OCI-LY7 (cell line): ENCODE measurements at regions of chr3 and their contacts with region 1.

Region 1: DNA sequence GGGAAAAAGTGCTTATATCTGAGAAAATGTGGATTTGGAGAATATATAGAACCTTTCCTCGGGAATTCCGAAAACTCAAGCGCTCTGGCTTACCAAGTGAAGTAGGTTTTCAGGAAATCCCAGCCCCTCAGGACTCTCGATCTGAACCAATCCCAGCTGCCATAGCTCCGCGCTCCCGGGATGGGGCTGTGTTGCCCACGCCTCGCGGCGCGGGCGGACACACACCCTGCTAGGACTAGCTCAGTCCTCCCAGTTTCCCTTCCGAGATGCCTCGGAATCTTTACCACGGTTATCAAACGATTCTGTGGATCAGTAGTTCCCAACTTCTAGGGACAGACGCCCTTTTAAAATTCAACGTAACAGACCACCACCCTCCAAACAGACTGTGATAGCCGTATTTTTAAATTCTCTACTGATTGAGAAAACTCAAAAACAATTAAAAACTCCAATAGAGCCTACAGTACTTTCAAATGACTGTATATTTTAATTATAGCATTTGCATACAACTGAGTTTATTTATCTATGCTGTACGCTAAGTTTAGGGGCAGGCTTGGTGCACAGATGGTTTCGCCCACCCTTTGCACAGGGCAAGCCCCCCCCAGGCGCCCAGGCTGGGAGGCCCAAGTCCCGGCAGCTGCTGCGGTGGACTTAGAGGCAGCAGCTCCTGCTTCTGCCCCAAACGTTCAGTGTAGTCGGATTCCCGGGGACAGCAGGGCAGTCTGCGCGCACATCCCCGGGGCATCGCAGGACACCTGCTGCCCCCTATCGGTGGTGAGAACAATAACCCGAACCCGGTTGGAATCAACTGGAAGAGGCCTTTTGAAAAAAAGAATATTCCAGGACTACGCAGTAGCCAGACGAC is 52.3 kb downstream of the CCDC54 start:
- DNase-seq: peak; percentile 74
- H3K4me3 ChIP-seq: peak overlapping the region; percentile 19
- H3K27ac ChIP-seq: no peak overlapping the region
- H3K4me1 ChIP-seq: peaks cover 71% of the 10 kb centered on the region
- CTCF ChIP-seq: peak; percentile 88

Region 2: GRCh38 chr3:107142786-107143575 is 286.6 kb before region 1 on chr3:
- CTCF ChIA-PET with region 1: no interaction called
- POLR2A ChIA-PET with region 1: no interaction called
- intact Hi-C with region 1: loop called (anchors 10 kb)
- DNase-seq: peak; percentile 89
- H3K4me3 ChIP-seq: peak overlapping the region; percentile 7
- H3K27ac ChIP-seq: peak overlapping the region; percentile 82
- H3K4me1 ChIP-seq: peaks cover 28% of the 10 kb centered on the region
- CTCF ChIP-seq: no peak

Region 3: DNA sequence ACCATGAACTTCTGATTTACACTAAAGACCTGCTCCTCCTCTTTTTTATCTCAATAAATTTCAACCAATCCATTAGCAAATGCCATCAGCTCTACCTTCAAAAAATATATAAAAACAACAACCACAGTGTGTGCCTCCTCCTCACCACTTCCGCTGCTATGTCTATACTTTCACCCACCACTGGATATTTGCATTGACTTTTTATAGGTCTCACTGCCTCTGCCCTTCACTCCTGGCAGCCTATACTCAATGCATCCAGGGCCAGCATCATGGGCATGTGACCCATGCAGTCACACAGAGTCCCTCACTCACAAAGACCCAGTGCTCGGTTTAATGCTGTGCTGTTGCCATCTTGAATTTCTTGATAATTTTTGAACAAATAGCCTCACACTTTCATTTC is 105.8 kb before region 1 on chr3:
- CTCF ChIA-PET with region 1: no interaction called
- POLR2A ChIA-PET with region 1: interaction called, 3 read pairs
- intact Hi-C with region 1: loop called (anchors 2 kb)
- DNase-seq: peak; percentile 77
- H3K4me3 ChIP-seq: peak overlapping the region; percentile 22
- H3K27ac ChIP-seq: peak overlapping the region; percentile 67
- H3K4me1 ChIP-seq: peaks cover 44% of the 10 kb centered on the region
- CTCF ChIP-seq: no peak

Region 4: DNA sequence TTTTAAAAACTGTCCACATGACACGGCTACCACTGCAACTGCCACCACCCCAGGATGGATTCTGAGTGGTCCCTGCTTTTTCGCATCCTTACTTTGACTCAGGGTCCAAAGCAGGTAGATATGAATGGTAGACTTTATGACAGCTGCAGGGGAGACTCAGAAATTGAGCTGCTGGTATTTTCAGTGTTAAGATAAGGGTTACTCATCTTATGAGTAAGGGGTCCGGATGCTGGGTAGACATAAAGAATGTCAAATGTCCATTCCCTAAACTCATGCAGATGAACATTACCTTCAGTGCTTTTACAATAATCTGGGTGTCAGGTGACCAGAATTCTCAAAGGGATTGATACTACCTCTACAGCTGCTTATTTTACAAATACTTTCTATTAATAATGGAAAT is 67.3 kb after region 1 on chr3:
- CTCF ChIA-PET with region 1: no interaction called
- POLR2A ChIA-PET with region 1: no interaction called
- intact Hi-C with region 1: no loop called
- DNase-seq: no peak
- H3K4me3 ChIP-seq: no peak overlapping the region
- H3K27ac ChIP-seq: no peak overlapping the region
- H3K4me1 ChIP-seq: no peaks in the 10 kb centered on the region
- CTCF ChIP-seq: no peak

Region 5: GRCh38 chr3:107543666-107544065 is 114.1 kb after region 1 on chr3:
- CTCF ChIA-PET with region 1: no interaction called
- POLR2A ChIA-PET with region 1: interaction called, 4 read pairs
- intact Hi-C with region 1: loop called (anchors 5 kb)
- DNase-seq: peak; percentile 28
- H3K4me3 ChIP-seq: no peak overlapping the region
- H3K27ac ChIP-seq: no peak overlapping the region
- H3K4me1 ChIP-seq: no peaks in the 10 kb centered on the region
- CTCF ChIP-seq: peak; percentile 76

Region 6: DNA sequence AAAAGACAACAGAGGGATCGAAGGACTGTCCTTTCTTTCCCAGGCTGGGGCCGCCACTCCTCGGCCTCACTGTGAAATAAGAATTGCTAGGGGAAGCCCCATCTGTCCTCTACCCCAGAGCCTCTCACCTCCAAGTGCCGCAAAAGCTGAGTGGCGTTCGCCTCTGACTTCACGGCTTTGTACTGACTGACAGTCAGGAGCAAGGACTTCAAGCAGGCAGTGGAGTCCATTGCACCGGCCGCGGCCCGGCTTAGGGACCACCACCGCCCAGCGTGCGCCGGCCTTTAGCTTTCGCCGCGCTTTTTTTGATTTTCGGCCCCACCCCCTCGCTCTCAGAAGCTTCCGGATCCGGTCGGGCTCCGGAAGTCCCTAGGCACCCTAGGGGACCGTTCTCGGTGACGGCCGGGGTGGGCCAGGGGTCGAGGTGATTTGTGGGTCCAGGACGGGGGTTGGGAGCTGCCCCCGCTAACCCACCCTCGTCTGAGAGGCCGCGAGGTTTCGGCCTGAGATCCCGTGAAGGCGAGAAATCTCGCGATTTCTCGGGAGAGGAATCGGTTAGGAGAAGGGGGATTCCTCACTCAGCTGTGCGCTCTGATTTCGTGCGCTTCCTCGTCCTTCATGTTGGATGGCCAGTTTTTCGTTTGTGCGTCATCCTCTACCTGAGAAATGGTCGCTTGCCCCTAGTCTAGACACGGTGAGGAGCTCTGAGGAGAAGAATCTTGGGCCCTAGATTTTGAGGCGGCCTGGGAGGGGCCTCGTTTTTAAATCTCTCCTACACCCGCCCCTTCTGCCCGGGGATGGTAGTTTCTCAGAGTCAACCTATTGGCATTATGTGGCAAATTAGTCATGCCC is 1159.8 kb after region 1 on chr3 and contains the starts of genes CIP2A and DZIP3:
- CTCF ChIA-PET with region 1: no interaction called
- POLR2A ChIA-PET with region 1: no interaction called
- intact Hi-C with region 1: loop called (anchors 10 kb)
- DNase-seq: peak; percentile 97
- H3K4me3 ChIP-seq: peak within 1 kb of the TSS; percentile 93
- H3K27ac ChIP-seq: peak within 1 kb of the TSS; percentile 87
- H3K4me1 ChIP-seq: peaks cover 40% of the 10 kb centered on the region
- CTCF ChIP-seq: no peak
- total RNA-seq, gene CIP2A: 71.9 and 74.1 TPM in 2 replicates
- total RNA-seq, gene DZIP3: 14.5 and 16.6 TPM in 2 replicates